Caco-2 (cell line): ENCODE measurements at regions of chr17 and their contacts with region 1.

Region 1: DNA sequence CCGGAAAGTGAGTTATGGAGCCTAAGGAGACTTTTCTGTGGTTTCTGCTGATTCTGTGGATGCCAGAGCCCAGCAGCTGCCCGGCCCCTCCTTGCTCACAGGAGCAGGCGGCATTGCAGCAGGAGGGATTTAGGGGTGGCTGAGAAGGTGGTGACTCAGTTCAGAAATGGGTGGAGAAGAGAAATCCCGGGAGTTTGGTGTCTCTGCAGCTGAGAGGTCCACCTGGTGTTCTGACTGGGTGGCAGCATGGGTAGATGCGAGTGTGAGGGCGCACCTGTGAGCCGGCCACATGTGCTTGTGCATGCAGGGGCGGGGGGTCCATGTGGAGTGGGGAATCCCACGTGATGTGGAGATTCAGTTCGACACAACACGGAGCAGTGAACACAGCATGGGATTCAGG is 16.1 kb upstream of the SPPL2C start:
- DNase-seq: no peak
- H3K4me3 ChIP-seq: no peak overlapping the region
- H3K4me3 Mint-ChIP-seq: no peak overlapping the region
- H3K27ac Mint-ChIP-seq: no peak overlapping the region
- H3K4me1 ChIP-seq: no peaks in the 10 kb centered on the region
- H3K4me1 Mint-ChIP-seq: peaks cover 10% of the 10 kb centered on the region
- H3K27me3 ChIP-seq: no peaks in the 10 kb centered on the region; the same call in 1 of the 2 replicates
- H3K27me3 Mint-ChIP-seq: peaks cover 7% of the 10 kb centered on the region
- CTCF ChIP-seq: peak in 1 of 2 experiments; percentile 20

Region 2: DNA sequence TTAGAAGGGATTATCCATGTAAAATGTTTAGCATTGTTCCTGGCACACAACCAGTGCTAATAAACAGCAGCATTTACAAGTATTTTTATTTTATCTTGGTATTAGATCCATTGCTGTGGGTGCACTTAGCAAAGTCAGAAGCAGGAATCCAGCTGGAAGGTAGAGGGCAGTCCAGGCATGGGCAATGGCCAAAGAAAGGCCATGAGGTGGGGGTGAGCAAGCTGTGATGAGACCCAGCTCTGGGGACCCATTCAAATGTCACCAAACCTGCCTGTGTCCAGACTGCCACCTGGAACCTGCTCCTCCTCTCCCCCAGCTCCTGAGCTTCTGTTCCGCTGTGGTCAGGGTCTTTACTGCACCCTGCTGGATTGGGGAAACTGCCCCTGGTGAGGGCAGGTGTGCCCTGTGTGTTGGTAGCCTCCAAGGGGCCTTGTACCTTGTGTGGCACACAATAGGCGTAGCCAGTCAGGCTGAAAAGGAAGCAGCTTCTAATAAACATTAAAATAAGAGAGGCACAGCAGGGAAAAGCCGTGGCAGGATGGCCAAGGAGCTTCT is 162.5 kb before region 1 on chr17:
- CTCF ChIA-PET with region 1: interaction called, 15 read pairs
- POLR2A ChIA-PET with region 1: no interaction called
- intact Hi-C with region 1: no loop called
- DNase-seq: no peak
- H3K4me3 ChIP-seq: no peak overlapping the region
- H3K4me3 Mint-ChIP-seq: no peak overlapping the region
- H3K27ac Mint-ChIP-seq: no peak overlapping the region
- H3K4me1 ChIP-seq: no peaks in the 10 kb centered on the region
- H3K4me1 Mint-ChIP-seq: no peaks in the 10 kb centered on the region
- H3K27me3 ChIP-seq: peaks cover 3% of the 10 kb centered on the region
- H3K27me3 Mint-ChIP-seq: peaks cover 16% of the 10 kb centered on the region
- CTCF ChIP-seq: no peak

Region 3: DNA sequence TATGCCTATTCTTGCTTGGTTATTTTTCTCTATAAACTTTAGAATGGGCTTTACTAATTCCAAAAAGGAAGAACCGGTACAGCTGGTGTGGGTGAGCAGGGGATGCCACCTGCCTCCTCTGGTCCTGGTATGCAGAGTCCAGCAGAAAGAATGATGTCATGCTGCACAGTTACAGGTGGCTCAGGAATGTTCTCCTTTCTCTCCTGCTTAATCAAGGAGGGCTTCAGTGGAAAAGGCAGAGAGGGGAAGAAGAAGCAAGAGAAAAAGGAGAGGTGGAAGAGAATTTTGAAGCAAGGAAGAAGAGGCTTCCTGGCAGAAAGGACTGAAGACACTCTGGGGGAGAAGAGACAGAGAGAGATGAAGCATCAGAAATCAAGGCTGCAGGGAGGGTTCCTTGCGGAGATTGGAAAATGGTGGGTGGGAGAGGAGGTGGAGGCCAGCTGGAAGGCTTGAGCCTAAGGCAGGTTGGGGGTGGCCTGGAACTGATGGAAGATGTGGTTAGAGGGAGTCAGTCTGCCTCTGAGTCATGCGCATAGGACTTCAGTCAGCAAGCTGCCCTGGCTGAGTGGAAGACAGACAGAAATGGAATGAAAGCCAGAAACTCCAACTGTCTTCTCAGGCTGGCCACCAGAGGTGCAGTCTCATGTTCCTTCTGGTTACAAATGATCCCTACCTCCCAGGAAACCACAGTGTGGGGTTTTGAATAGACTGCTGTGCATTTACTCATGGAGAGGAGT is 109.1 kb before region 1 on chr17:
- CTCF ChIA-PET with region 1: interaction called, 18 read pairs
- POLR2A ChIA-PET with region 1: no interaction called
- intact Hi-C with region 1: loop called (anchors 1 kb)
- DNase-seq: peak in 1 of 2 experiments; percentile 46
- H3K4me3 ChIP-seq: no peak overlapping the region
- H3K4me3 Mint-ChIP-seq: no peak overlapping the region
- H3K27ac Mint-ChIP-seq: no peak overlapping the region
- H3K4me1 ChIP-seq: 0 out of 2 replicates have a peak, but pooled peaks cover 4% of the 10 kb centered on the region
- H3K4me1 Mint-ChIP-seq: no peaks in the 10 kb centered on the region
- H3K27me3 ChIP-seq: no peaks in the 10 kb centered on the region
- H3K27me3 Mint-ChIP-seq: peaks cover 25% of the 10 kb centered on the region
- CTCF ChIP-seq: peak; percentile 35 to 65

Region 4: DNA sequence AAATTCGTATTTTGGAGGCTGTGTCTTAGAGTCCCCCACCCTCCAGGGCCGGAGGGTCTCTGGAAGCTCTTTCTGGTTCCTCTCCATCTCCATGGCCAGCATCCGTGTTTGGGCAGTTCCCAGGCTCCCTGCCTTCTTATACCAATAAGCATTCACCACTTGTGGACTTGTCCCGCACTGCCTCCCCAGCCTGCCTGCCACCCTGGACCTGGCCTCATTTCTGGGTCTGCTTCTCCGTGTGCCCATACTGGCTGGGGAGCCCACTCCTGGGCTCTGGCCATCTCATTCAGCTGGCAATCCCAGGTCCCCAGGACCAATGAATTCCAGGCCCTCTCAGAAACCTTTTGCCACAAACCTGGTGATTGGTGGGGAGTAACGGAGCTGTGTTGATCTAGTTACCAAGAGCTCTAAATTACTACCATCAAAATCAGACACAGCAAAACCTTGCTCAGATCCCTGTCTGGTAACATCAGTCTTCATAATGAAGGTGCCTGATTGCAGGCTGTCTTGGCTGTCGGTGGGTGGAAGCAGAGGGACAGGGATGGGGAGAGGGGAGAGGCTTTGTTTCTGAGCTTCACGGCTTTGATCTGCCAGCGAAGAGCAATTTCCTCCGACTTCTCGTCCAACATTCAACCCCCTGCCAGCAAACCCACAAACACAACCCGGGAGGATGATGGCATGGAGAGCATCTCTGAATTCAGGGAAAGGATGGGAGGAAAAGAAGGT is 72.2 kb before region 1 on chr17:
- CTCF ChIA-PET with region 1: no interaction called
- POLR2A ChIA-PET with region 1: no interaction called
- intact Hi-C with region 1: loop called (anchors 1 kb)
- DNase-seq: no peak
- H3K4me3 ChIP-seq: no peak overlapping the region
- H3K4me3 Mint-ChIP-seq: no peak overlapping the region
- H3K27ac Mint-ChIP-seq: no peak overlapping the region
- H3K4me1 ChIP-seq: no peaks in the 10 kb centered on the region
- H3K4me1 Mint-ChIP-seq: no peaks in the 10 kb centered on the region
- H3K27me3 ChIP-seq: no peaks in the 10 kb centered on the region
- H3K27me3 Mint-ChIP-seq: peaks cover 14% of the 10 kb centered on the region
- CTCF ChIP-seq: peak in 1 of 2 experiments; percentile 44